SK-N-SH (cell line): ENCODE measurements at regions of chr2 and their contacts with region 1.

Region 1: DNA sequence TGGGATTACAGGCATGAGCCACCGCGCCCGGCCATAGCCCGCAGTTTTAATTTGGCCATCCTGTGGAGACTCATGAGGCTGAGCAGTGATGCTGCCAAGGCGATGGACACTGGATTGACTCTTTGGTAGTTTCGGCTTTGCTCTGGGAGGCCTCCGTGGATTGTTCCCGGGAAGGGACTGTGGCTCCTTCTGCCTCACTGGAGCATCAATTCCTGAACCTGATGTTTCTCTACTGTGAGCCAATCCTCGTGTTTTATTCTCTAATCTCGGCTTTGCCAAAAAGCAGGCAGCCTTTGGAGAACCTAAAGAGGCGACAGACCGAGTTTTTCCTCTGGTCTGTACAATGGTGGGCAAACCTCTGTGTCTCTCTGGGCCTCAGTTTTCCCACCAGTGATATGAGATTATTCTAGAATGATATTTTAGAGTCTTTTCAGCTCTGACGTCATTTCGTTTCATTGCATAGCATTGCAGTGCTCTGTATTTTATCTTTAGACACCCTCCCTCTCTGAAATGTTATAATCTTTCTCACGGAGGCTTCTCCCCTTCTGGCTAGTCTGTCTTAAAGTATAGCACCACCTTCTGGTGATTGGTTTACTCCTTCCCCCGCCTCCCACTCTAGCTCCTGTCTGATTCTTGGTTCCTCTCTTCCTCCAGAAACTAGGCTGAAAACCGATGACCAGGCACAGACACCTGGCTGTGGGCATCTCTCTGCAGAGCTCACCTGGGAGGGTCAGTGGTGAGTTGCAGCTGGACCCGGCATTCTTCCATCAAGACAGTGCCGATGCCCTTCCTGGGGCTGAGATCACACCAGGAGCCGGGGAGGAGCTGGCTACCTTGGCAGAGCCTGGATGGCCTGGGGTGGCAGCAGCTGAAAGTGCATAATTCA is 341.3 kb downstream of the MYCN start:
- DNase-seq: peak; percentile 61
- H3K4me3 ChIP-seq: no peak overlapping the region
- H3K27ac ChIP-seq: no peak overlapping the region
- H3K4me1 ChIP-seq: peaks cover 0 to 18% of the 10 kb centered on the region in 2 experiments; a peak in 1 of 4 replicates
- H3K27me3 ChIP-seq: no peaks in the 10 kb centered on the region
- CTCF ChIP-seq: no peak
- EP300 ChIP-seq: no peak
- RAD21 ChIP-seq: peak; percentile 76

Region 2: DNA sequence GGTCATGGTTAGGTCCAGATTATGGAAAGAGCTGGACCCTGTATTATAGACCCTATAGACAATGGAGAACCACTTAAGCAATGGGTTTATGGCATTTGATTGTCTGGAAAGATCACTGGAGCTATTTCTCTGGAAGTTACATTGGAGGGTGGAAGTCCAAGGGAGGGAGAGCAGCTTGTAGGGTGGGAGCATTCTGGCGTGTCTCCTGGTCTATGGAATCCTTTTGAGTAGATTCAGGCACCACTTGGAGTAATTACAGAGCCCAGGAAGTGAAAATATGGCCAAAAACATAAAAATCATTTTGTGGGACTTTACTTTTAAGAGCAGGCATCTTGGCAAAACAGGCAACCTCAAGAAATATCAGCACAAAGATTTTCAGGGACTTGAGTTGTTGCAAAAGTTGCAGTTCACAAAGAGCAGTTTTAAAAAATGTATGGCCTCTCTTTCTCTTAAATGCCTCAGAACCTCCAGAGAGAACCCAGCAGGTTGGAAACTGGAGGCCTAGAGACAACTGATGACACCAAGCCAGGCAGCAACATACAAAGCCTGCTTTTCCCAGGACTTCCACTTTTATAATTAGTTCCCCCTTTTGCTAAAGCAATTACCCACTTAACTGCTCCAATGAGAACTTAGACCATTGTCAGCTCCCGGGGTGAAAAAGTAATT is 10.3 kb before region 1 on chr2:
- CTCF ChIA-PET with region 1: interaction called, 24 read pairs
- POLR2A ChIA-PET with region 1: no interaction called
- DNase-seq: no peak
- H3K4me3 ChIP-seq: no peak overlapping the region
- H3K27ac ChIP-seq: no peak overlapping the region
- H3K4me1 ChIP-seq: peaks cover 0 to 10% of the 10 kb centered on the region in 2 experiments; a peak in 1 of 4 replicates
- H3K27me3 ChIP-seq: no peaks in the 10 kb centered on the region
- CTCF ChIP-seq: no peak
- EP300 ChIP-seq: no peak
- RAD21 ChIP-seq: no peak

Region 3: DNA sequence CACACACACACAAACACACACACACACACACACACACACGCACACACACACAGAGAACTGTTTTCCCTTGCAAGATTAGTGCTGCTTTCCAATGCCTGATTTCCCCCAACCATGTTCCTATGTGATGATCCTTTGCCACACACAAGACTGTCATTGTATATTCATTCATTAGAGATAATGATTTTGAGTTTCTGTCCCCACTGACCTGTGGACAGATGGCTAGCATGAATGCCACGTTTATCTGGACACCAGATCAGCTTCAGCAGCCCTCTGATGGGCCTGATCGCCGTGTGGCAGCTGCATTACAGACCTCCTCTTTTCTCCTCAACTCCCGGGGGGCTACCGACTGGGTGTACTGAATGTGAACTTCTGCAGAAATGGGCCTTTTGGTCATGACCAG is 11.7 kb after region 1 on chr2:
- CTCF ChIA-PET with region 1: interaction called, 22 read pairs
- POLR2A ChIA-PET with region 1: interaction called, 3 read pairs
- DNase-seq: peak; percentile 73
- H3K4me3 ChIP-seq: no peak overlapping the region; a peak in 1 of 4 replicates
- H3K27ac ChIP-seq: peak overlapping the region in 1 of 2 experiments; percentile 71; a peak in 2 of 4 replicates
- H3K4me1 ChIP-seq: peaks cover 0 to 29% of the 10 kb centered on the region in 2 experiments; a peak in 2 of 4 replicates
- H3K27me3 ChIP-seq: no peaks in the 10 kb centered on the region
- CTCF ChIP-seq: no peak
- EP300 ChIP-seq: peak in 1 of 2 experiments; percentile 93; a peak in 2 of 4 replicates
- RAD21 ChIP-seq: peak; percentile 31